Vagina (tissue), 2 donors: ENCODE measurements at regions of chr1 and their contacts with region 1.

Region 1: GRCh38 chr1:175154629-175155472 is 37.7 kb downstream of the KIAA0040 start:
- DNase-seq: no peak
- H3K4me3 ChIP-seq: no peak overlapping the region
- H3K27ac ChIP-seq: no peak overlapping the region
- H3K4me1 ChIP-seq: no peaks in the 10 kb centered on the region
- H3K27me3 ChIP-seq: no peaks in the 10 kb centered on the region
- CTCF ChIP-seq: peak; percentile 87 to 97 (median 96)
- POLR2A ChIP-seq: no peak

Region 2: DNA sequence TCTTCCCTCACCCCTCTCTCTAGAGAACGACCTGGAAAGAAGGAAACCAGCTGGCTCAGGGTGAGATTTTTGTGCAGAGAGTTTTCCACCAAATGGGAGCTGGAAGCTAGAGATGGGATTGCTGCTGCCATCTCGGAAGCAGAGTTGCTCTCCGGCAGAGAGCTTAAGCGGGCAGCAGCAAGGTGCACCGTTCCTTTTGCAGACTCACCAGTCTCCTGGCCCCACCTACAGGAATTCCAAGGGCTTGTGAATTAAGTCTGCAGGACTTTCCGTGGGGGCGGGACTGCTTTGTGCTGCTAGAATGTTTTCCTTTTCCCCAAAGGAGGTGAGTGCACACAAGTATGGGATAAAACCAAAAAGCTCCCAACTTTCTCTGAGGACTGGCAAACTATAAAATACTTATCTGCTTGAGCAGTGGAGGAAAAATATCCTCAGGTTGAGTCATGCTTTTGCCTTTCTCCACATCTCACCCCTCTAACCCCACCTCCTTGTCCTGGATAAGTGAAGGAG is 66.9 kb after region 1 on chr1:
- intact Hi-C with region 1: loop called (anchors 10 kb)
- DNase-seq: no peak
- H3K4me3 ChIP-seq: no peak overlapping the region
- H3K27ac ChIP-seq: peak overlapping the region; percentile 9
- H3K4me1 ChIP-seq: peaks cover 25% of the 10 kb centered on the region
- H3K27me3 ChIP-seq: no peaks in the 10 kb centered on the region
- CTCF ChIP-seq: peak in 2 of 3 experiments; percentile 1 to 21
- POLR2A ChIP-seq: no peak

Region 3: DNA sequence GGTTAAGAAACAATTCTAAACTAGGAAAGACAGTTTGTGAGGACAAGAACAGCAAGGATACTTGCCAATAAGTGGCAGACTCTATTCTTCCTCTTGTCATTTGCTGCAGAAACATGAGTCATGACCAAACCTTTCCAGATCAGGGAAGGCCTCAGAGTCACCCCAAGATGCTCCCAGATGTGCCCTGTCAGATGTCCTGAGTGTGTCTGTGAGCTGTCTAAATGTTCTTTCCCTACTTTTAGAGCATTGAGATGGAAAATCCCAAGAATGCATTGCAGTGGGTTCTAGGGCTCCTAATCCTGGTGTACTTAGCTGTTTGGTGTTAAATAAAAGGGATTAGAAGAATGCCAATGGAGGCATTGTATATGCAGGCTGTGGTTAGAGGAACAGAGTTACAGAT is 95.2 kb after region 1 on chr1:
- intact Hi-C with region 1: no loop called
- DNase-seq: no peak
- H3K4me3 ChIP-seq: no peak overlapping the region
- H3K27ac ChIP-seq: no peak overlapping the region
- H3K4me1 ChIP-seq: no peaks in the 10 kb centered on the region
- H3K27me3 ChIP-seq: no peaks in the 10 kb centered on the region
- CTCF ChIP-seq: no peak
- POLR2A ChIP-seq: no peak

Region 4: DNA sequence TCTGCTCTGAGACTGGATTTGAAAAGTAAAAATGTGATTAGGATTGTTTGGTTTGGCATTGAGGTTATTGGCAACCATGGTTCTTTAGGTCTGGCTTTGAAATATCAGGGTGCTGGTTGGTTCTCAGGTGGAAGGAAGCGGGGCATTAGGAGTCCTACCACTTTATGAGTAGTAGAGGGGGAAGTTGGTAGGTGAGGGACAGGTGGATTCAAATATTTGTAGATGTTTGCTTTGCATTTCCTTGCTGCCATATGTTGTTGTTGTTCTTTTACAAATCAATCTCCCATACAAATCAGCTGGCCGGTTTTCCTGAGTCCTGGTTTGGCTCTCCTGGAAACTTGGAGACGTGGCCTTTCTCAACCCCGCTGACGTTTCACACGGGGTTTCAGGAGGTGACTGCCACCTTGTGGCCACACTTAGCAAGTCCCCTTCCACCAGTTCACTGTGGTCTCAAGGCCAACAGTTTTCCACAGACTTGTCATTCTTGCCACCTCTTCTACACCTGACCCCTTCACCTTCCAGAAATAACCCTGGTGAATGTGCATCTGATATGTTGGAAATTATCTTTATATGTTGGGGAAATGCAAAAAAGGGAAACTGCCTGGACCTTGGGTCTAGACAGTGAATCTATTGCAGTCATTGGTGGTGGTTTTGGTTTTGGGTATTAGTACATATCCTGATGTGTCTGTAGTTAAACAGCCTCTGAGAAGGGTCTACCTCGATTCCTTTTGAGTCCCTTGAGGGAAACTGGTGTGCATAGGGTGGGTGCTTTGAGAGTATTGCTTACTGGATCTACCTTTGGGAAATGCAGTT is 164.8 kb after region 1 on chr1:
- intact Hi-C with region 1: loop called (anchors 2 kb)
- DNase-seq: no peak
- H3K4me3 ChIP-seq: no peak overlapping the region
- H3K27ac ChIP-seq: peak overlapping the region; percentile 17
- H3K4me1 ChIP-seq: peaks cover 29% of the 10 kb centered on the region
- H3K27me3 ChIP-seq: no peaks in the 10 kb centered on the region
- CTCF ChIP-seq: peak; percentile 79 to 89 (median 83)
- POLR2A ChIP-seq: no peak

Region 5: DNA sequence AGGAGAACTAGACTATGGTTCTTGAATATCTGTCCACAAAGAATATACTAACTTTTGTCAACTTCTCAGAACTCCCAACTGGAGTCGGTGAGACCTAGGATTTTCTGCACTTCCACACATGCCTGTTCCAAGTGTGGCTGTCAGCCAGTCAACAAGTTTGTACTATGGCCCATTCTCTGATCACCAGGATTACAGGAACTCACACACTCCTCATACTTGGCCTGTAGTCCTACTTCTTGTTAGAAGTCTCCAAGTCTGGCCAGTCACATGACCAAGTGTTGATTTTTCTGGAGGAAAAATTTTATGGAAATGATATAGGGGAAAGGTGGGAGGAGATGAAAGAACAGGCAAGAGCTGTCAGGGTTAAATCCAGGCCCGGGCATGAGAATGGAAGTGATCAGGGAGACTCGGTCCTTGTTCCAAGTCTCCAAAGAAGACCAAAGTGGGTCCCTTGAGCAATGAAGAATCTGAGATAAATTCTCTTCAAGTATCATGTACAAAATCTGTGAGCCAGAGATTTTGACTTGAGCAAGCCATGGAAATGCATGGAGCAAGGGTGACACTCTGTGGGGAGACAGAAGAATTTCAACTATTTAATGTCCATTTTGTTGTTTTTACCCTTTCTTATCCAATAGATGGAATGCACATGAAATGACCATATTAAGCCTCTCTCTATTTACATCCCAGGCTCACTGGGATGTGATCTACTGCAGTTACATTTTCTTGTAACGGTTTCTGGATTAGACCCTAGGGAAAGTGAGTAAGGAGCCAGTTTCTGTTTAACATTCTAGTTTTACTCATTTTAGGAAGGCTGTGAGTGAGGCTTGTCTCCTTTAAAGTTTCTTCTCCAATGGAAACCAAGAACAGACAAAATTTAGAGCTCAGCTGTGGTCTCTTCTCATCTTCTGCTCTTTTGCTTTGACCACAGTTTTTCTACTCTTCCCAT is 1688.8 kb after region 1 on chr1:
- intact Hi-C with region 1: loop called (anchors 10 kb)
- DNase-seq: no peak
- H3K4me3 ChIP-seq: no peak overlapping the region
- H3K27ac ChIP-seq: no peak overlapping the region
- H3K4me1 ChIP-seq: no peaks in the 10 kb centered on the region
- H3K27me3 ChIP-seq: no peaks in the 10 kb centered on the region
- CTCF ChIP-seq: peak; percentile 2 to 65 (median 53)
- POLR2A ChIP-seq: no peak